Activated CD4-positive, alpha-beta memory T cell treated with anti-CD3 and anti-CD28 coated beads, Interleukin-2, amount 10 ng/mL, durations not matched to agents 7 days and 5 days (primary cell): ENCODE measurements at regions of chr6 and their contacts with region 1.

Region 1: GRCh38 chr6:27893059-27893835 is 18.9 kb downstream of the OR2B2 start:
- DNase-seq: peak; percentile 95
- H3K4me3 Mint-ChIP-seq: no peak overlapping the region
- H3K27ac Mint-ChIP-seq: no peak overlapping the region
- H3K4me1 Mint-ChIP-seq: peaks cover 54% of the 10 kb centered on the region
- H3K27me3 Mint-ChIP-seq: no peaks in the 10 kb centered on the region

Region 2: GRCh38 chr6:26025894-26026832 is 1867.1 kb before region 1 on chr6:
- CTCF ChIA-PET with region 1: interaction called, 4 read pairs
- POLR2A ChIA-PET with region 1: interaction called, 46 read pairs
- DNase-seq: peak; percentile 94
- H3K4me3 Mint-ChIP-seq: peak overlapping the region; percentile 75
- H3K27ac Mint-ChIP-seq: peak overlapping the region; percentile 100
- H3K4me1 Mint-ChIP-seq: peaks cover 84% of the 10 kb centered on the region
- H3K27me3 Mint-ChIP-seq: peaks cover 2% of the 10 kb centered on the region

Region 3: GRCh38 chr6:26196846-26197648 is 1696.2 kb before region 1 on chr6:
- CTCF ChIA-PET with region 1: no interaction called
- POLR2A ChIA-PET with region 1: interaction called, 46 read pairs
- DNase-seq: peak; percentile 85
- H3K4me3 Mint-ChIP-seq: peak overlapping the region; percentile 93
- H3K27ac Mint-ChIP-seq: peak overlapping the region; percentile 96
- H3K4me1 Mint-ChIP-seq: peaks cover 49% of the 10 kb centered on the region
- H3K27me3 Mint-ChIP-seq: no peaks in the 10 kb centered on the region

Region 4: DNA sequence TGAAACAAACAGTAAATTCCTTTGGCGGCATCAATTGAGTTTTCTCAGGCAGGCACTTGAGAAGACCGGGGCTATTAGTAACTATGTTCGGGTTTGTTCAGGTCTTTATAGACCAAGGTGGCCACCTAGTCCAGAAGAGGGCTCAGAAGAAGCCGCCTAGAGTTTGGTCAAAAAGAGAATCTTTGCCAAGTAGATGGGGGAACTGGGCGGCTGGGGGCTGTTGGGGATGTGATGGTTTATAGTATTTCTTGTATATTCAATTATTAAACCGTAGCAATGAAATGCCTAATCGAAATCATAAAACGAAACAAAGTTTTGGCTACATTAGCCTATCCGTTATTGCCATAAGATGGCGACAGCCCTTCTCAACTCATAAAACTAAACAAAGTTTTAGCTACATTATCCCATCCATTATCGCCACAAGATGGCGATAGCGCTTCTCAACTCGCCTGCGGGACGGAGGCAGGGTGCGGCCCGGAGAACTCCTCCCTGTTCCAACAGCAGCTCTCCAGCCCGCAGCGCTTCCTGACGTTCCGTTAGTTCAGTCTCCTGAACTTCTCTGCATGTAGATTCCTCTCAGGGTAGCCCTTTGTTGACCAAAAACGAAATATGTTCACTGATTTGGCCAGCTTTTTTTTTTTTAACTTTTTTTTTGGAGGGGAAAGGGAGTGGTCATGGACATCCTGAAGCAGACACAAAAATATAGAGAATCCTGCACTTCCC is 766.3 kb before region 1 on chr6:
- CTCF ChIA-PET with region 1: interaction called, 8 read pairs
- POLR2A ChIA-PET with region 1: interaction called, 167 read pairs
- DNase-seq: peak; percentile 87
- H3K4me3 Mint-ChIP-seq: peak overlapping the region; percentile 67
- H3K27ac Mint-ChIP-seq: peak overlapping the region; percentile 84
- H3K4me1 Mint-ChIP-seq: peaks cover 51% of the 10 kb centered on the region
- H3K27me3 Mint-ChIP-seq: no peaks in the 10 kb centered on the region

Region 5: DNA sequence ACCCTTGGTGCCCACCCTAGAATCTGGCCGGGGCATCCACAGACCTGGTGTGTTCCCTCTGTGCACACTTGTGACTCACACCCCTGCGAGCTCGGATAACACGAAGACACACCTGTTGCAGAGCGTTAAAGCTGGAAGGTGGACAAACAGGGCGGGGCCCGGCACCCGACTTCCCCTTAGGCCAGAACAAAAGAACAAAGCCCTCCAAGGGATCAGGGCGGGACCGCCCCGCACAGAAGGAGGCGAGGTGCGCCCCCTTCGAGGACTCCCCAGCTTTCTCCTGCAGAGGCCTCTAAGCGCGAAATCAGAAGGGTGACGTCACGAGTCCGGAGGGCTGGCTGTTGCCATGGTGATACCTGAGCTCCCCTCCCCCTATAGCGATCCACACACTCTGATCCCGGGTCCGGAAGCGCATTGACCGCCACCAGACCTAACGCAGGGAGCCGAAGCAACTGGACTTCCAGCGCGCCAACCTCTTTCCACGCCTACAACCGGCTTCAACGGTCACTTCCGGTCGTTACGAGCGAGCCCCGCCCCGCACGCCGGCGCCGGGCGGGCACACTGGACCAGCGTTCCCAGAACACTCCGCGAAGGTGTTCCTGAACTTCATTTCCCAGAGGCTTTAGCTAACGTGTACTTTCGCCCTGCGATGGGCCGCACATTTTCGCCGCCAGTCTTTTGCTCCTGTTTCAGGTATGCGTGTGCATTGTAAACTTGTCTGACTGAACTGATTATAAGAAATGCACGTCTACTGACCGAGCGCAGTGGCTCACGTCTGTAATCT is 420.4 kb before region 1 on chr6 and contains the start of gene ZNF184:
- CTCF ChIA-PET with region 1: no interaction called
- POLR2A ChIA-PET with region 1: interaction called, 15 read pairs
- DNase-seq: peak; percentile 90
- H3K4me3 Mint-ChIP-seq: peak within 1 kb of the TSS; percentile 85
- H3K27ac Mint-ChIP-seq: peak within 1 kb of the TSS; percentile 93
- H3K4me1 Mint-ChIP-seq: peaks cover 52% of the 10 kb centered on the region
- H3K27me3 Mint-ChIP-seq: peaks cover 4% of the 10 kb centered on the region
- total RNA-seq, gene ZNF184: 16.2 to 16.3 TPM

Region 6: DNA sequence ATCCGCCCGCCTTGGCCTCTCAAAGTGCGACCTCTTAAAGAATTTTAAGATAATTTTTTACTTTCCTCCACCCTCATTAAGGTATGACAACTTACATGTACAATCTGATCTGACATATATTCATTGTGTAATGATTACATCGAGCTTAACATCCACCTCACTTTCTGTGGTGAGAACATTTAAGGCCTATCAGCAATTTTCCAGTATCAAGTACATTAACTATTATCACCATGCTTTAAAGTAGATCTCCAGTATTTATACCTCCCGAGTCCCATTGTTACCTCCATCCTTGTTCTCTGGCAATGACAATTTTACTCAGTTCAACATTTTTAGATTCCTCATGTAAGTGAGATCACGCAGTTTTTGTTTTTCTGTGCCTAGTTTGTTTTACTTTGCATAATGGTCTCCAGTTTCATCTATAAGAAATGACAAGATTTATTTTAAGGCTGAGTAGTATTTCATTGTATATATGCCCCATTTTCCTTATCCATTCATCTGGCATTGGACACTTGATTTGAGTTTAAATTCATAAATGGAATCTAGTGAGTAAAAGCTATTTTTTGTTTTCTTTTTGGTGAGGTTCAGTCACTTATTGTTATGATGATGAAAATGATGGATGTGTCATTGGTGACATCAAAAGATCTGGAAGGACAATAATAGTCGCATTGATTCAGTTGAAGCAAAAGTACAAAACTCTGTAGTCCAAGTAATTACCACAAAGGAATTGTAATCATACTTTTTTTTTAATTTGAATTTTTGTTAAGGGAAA is 68.0 kb before region 1 on chr6:
- CTCF ChIA-PET with region 1: interaction called, 67 read pairs
- POLR2A ChIA-PET with region 1: interaction called, 282 read pairs
- DNase-seq: no peak
- H3K4me3 Mint-ChIP-seq: peak overlapping the region; percentile 82
- H3K27ac Mint-ChIP-seq: peak overlapping the region; percentile 99
- H3K4me1 Mint-ChIP-seq: peaks cover 51% of the 10 kb centered on the region
- H3K27me3 Mint-ChIP-seq: no peaks in the 10 kb centered on the region

Region 7: DNA sequence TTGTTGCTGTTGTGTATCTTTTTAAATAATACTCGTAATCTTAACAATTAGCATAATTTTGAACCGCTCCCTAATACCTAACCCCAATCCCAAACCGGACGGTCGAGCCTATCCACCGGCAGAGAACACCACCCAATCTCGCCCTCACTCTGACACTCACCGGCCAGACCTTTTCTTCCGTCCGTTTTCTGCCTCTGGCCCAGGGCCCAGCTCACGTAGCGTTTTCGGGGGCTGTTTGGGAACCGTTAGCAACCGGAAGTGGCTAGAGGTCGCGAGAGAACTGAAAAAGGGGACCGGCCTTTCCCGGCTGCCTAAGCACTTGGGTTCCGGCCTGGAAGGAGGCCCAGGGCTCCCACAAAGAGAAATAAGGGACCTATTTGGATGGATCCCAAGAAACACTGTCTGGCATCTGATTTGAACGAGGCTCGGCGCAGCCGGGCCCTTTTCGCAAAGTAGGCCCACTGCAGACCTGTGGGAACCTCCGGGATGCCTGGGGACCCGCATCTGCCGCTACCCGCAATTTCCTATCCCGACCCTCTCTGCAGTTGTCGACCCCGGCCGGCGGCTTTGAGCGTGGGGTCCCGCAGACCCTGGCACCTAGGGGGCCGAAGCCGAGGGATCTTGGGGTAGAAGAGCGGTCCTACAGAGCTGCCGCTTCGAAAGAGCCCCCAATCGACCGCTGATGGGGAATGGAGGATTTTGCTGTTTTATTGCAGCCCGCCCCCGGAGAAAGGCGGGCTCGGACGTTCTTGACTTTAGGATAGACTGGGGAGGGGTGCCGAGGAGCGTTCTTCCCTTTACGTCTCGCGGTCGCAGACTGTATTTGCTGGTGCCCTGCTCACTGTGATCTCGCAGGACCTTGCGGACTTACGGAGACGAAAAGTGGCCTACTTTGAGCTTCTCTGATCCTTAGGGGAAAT is 243.6 kb after region 1 on chr6:
- CTCF ChIA-PET with region 1: no interaction called
- POLR2A ChIA-PET with region 1: interaction called, 17 read pairs
- DNase-seq: peak; percentile 74
- H3K4me3 Mint-ChIP-seq: peak overlapping the region; percentile 92
- H3K27ac Mint-ChIP-seq: peak overlapping the region; percentile 88
- H3K4me1 Mint-ChIP-seq: peaks cover 71% of the 10 kb centered on the region
- H3K27me3 Mint-ChIP-seq: no peaks in the 10 kb centered on the region